WTC11 (cell line): ENCODE measurements at regions of chr22 and their contacts with region 1.

Region 1: DNA sequence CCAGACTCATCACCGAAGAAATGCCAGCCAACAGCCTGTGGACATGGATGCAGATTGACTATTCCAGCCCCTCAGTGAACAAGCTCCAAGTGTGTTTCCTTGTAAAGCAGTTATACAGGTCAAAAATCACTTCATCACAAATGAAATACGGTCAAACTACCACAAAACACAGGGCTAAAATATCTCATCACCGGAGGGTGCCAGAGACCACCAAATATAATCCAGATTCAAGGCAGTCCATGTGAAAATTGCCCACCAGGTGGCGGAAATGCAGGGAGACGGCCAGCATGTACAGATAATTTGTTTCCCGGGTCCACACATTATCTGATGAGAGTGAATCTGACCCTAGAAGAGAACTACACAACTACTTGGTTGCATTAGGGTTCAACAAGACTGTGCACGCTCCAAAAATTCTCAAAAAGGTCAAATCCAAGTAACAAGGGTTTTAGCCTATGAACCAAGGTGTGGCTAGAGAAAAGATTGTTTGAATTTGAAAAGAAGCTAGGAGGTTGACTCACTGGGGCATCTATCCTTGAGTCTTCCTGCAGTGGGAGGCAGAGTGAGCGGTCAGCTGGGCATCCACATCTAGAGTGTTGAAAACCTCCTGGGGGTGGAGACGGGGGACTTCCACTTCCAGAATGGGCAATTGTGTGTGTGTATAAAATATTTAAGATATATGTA is 71.7 kb downstream of the IGLL5 start:
- DNase-seq: peak; percentile 84
- ATAC-seq: peak; percentile 34
- H3K4me3 Mint-ChIP-seq: no peak overlapping the region
- H3K27ac Mint-ChIP-seq: no peak overlapping the region
- H3K4me1 Mint-ChIP-seq: peaks cover 9% of the 10 kb centered on the region
- H3K27me3 Mint-ChIP-seq: peaks cover 52% of the 10 kb centered on the region
- CTCF ChIP-seq: peak; percentile 83

Region 2: DNA sequence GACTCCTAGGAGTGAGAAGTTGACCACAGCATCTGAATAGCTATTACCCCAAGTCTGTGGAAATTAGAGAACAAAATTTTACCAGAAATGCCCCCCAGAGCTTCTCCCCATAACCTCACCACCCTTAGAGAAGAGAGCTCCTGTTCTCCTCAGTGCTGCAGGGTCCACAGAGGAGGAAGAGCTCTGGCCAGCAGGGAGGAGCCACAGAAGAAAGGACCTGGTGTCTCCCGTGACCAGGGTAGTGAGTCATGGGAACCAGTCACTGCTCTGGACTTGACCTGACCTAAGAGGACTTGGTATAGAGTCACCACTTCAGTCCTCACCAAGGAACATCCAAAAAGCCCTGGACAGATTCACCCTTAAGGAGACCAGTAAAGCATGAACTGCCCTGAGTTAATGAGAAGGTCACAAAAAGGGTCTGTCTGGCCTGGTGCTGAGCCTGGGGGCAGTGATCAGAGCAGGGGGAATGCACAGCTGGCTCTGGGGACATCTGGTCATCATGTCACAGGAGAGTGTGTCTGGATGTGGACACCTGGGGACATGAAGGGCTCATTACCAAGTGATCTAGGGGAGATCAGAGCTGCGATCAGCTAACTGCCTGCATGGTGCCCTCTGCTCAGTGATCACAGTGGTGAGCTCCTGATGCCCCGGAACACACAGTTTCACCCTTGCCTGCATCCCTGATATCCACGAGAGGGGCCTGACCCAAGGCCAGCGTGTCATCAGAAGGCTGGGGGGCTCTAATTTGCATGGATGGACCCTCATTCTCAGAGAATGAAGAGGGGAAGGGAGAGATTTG is 873.4 kb before region 1 on chr22:
- CTCF ChIA-PET with region 1: no interaction called
- POLR2A ChIA-PET with region 1: no interaction called
- DNase-seq: no peak
- ATAC-seq: no peak
- H3K4me3 Mint-ChIP-seq: no peak overlapping the region
- H3K27ac Mint-ChIP-seq: no peak overlapping the region
- H3K4me1 Mint-ChIP-seq: no peaks in the 10 kb centered on the region
- H3K27me3 Mint-ChIP-seq: peaks cover 100% of the 10 kb centered on the region
- CTCF ChIP-seq: no peak

Region 3: GRCh38 chr22:22802339-22802970 is 156.8 kb before region 1 on chr22:
- CTCF ChIA-PET with region 1: interaction called, 18 read pairs
- POLR2A ChIA-PET with region 1: no interaction called
- DNase-seq: no peak
- ATAC-seq: peak; percentile 62
- H3K4me3 Mint-ChIP-seq: no peak overlapping the region
- H3K27ac Mint-ChIP-seq: no peak overlapping the region
- H3K4me1 Mint-ChIP-seq: peaks cover 5% of the 10 kb centered on the region; the same call in 1 of the 2 replicates
- H3K27me3 Mint-ChIP-seq: peaks cover 94% of the 10 kb centered on the region
- CTCF ChIP-seq: no peak

Region 4: GRCh38 chr22:22877523-22878210 is 81.6 kb before region 1 on chr22:
- CTCF ChIA-PET with region 1: interaction called, 21 read pairs
- POLR2A ChIA-PET with region 1: no interaction called
- DNase-seq: peak; percentile 85
- ATAC-seq: peak; percentile 83
- H3K4me3 Mint-ChIP-seq: no peak overlapping the region
- H3K27ac Mint-ChIP-seq: no peak overlapping the region
- H3K4me1 Mint-ChIP-seq: no peaks in the 10 kb centered on the region
- H3K27me3 Mint-ChIP-seq: peaks cover 79% of the 10 kb centered on the region
- CTCF ChIP-seq: peak; percentile 78

Region 5: DNA sequence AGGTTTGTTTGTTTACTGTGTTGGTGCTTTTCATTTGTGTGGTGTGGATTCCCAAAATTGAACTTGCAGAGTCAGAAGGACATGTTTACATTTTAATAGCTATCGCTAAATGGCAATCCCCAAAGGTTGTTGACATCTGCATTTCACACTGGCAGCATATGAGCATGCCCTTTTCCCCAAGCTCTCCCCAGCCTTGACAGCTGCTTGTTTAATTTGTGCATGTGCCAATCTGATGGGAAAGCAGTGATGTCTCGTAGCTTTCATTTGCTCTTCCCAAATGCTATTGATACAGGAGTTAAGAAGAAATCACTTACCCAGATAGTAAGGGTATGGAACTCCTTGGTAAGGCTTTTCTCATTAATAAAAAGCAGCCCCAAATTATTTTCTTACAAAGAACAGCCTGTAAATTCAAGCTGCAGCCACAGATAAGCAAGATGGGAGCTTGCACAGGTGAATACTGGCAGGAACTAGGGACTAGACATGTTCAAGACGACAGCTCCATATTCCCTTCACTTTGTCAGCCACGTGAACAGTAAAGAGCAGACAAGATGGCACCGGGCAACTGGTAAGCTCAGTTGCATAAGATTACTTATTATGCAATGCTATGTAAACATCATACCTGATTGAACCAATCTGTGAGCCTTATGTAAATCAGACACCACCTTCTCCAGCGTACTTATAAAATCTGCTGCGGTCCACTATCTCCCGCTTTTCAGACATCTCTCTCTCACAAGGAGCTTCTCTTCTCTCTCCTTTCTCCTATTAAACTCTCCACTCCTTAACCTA is 15.7 kb after region 1 on chr22:
- CTCF ChIA-PET with region 1: interaction called, 17 read pairs
- POLR2A ChIA-PET with region 1: no interaction called
- DNase-seq: no peak
- ATAC-seq: no peak
- H3K4me3 Mint-ChIP-seq: no peak overlapping the region
- H3K27ac Mint-ChIP-seq: no peak overlapping the region
- H3K4me1 Mint-ChIP-seq: no peaks in the 10 kb centered on the region
- H3K27me3 Mint-ChIP-seq: peaks cover 82% of the 10 kb centered on the region
- CTCF ChIP-seq: no peak

Region 6: GRCh38 chr22:23007823-23008222 is 48.5 kb after region 1 on chr22:
- CTCF ChIA-PET with region 1: no interaction called
- POLR2A ChIA-PET with region 1: no interaction called
- DNase-seq: no peak
- ATAC-seq: no peak
- H3K4me3 Mint-ChIP-seq: no peak overlapping the region
- H3K27ac Mint-ChIP-seq: no peak overlapping the region
- H3K4me1 Mint-ChIP-seq: no peaks in the 10 kb centered on the region
- H3K27me3 Mint-ChIP-seq: peaks cover 55% of the 10 kb centered on the region
- CTCF ChIP-seq: no peak

Region 7: GRCh38 chr22:23119494-23120414 is 160.5 kb after region 1 on chr22:
- CTCF ChIA-PET with region 1: interaction called, 92 read pairs
- POLR2A ChIA-PET with region 1: interaction called, 3 read pairs
- DNase-seq: no peak
- ATAC-seq: peak; percentile 36; the same call in 1 of the 2 replicates
- H3K4me3 Mint-ChIP-seq: no peak overlapping the region
- H3K27ac Mint-ChIP-seq: no peak overlapping the region
- H3K4me1 Mint-ChIP-seq: peaks cover 7% of the 10 kb centered on the region
- H3K27me3 Mint-ChIP-seq: peaks cover 16% of the 10 kb centered on the region
- CTCF ChIP-seq: no peak

Region 8: DNA sequence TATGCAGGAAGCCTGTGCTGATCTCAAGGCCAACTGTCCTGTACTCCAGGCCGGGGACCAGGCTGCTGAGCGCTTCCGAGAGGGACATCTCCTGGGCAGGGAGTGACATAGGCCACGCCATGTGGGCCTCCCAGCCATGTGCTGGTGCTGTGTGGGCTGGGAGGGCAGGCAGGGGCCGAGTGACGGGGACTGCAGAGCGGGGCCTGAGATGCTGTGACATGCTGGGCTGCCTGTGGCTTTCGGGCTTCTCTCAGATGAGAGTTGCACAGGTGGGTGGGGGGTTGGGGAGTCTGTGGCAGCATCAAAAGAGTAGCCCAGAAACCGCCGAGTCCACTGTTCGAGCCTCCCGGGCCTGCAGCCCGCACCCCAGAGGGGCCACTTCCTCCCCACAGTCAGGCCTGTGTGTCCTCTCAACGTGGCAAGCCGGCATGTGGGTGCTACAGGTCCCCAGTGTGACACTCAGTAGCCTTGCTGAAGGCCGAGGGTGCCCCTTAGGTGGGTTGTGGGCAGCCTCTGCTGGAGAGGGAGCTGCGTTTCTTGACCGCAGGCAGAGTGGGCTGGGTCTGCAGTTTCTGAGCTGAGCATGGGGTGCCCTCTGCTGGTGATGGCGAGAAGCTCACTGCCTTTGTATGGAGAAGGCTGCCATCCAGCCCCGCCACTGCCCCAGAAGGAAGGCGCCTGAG is 322.3 kb after region 1 on chr22:
- CTCF ChIA-PET with region 1: interaction called, 21 read pairs
- POLR2A ChIA-PET with region 1: no interaction called
- DNase-seq: peak; percentile 94
- ATAC-seq: peak; percentile 92
- H3K4me3 Mint-ChIP-seq: no peak overlapping the region
- H3K27ac Mint-ChIP-seq: no peak overlapping the region
- H3K4me1 Mint-ChIP-seq: no peaks in the 10 kb centered on the region; the same call in 1 of the 2 replicates
- H3K27me3 Mint-ChIP-seq: no peaks in the 10 kb centered on the region
- CTCF ChIP-seq: peak; percentile 89